ENCODE measurements at regions of chr1 and their contacts with region 1.

Region 1: GRCh38 chr1:112431038-112431437 is 35.0 kb downstream of the CTTNBP2NL start:
- DNase-seq: no peak
- ATAC-seq: no peak
- H3K4me3 ChIP-seq: no peak overlapping the region
- H3K27ac ChIP-seq: no peak overlapping the region
- H3K4me1 ChIP-seq: no peaks in the 10 kb centered on the region
- H3K27me3 ChIP-seq: no peaks in the 10 kb centered on the region
- CTCF ChIP-seq: no peak

Region 2: DNA sequence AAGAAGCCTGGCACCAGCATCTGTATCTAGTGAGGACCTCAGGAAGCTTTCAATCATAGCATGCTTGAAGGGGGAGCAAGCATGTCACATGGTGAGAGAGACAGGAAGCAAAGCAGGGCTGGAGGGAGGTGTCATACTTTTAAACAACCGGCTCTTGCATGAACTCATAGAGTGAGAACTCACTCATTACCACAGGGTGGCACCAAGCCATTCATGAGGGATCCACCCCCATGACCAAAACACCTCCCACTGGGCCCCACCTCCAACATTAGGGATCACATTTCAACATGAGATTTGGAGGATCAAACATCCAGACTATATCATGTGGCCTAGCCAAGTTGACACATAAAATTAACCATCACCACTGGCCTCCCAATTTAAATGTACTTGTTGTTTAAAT is 316.5 kb before region 1 on chr1:
- CTCF ChIA-PET with region 1: no interaction called
- POLR2A ChIA-PET with region 1: no interaction called
- intact Hi-C with region 1: no loop called
- DNase-seq: no peak
- ATAC-seq: no peak
- H3K4me3 ChIP-seq: no peak overlapping the region
- H3K27ac ChIP-seq: no peak overlapping the region
- H3K4me1 ChIP-seq: no peaks in the 10 kb centered on the region
- H3K27me3 ChIP-seq: no peaks in the 10 kb centered on the region
- CTCF ChIP-seq: no peak

Region 3: GRCh38 chr1:112457241-112457640 is 26.2 kb after region 1 on chr1:
- CTCF ChIA-PET with region 1: no interaction called
- POLR2A ChIA-PET with region 1: interaction called, 13 read pairs
- intact Hi-C with region 1: no loop called
- DNase-seq: no peak
- ATAC-seq: no peak
- H3K4me3 ChIP-seq: no peak overlapping the region
- H3K27ac ChIP-seq: no peak overlapping the region
- H3K4me1 ChIP-seq: no peaks in the 10 kb centered on the region
- H3K27me3 ChIP-seq: no peaks in the 10 kb centered on the region
- CTCF ChIP-seq: no peak